Activated CD8-positive, alpha-beta T cell treated with anti-CD3 and anti-CD28 coated beads for 36 hours (primary cell): ENCODE measurements at regions of chr17 and their contacts with region 1.

Region 1: GRCh38 chr17:47615766-47616424 is 33.8 kb upstream of the KPNB1 start:
- DNase-seq: no peak
- ATAC-seq: no peak
- H3K4me3 Mint-ChIP-seq: no peak overlapping the region
- H3K27ac Mint-ChIP-seq: peak overlapping the region; percentile 13
- H3K4me1 Mint-ChIP-seq: peaks cover 15% of the 10 kb centered on the region
- H3K27me3 Mint-ChIP-seq: no peaks in the 10 kb centered on the region
- CTCF ChIP-seq: peak; percentile 84

Region 2: GRCh38 chr17:47352848-47353247 is 263.0 kb before region 1 on chr17:
- CTCF ChIA-PET with region 1: interaction called, 16 read pairs
- POLR2A ChIA-PET with region 1: no interaction called
- intact Hi-C with region 1: no loop called
- DNase-seq: no peak
- ATAC-seq: no peak
- H3K4me3 Mint-ChIP-seq: no peak overlapping the region
- H3K27ac Mint-ChIP-seq: no peak overlapping the region
- H3K4me1 Mint-ChIP-seq: peaks cover 4% of the 10 kb centered on the region
- H3K27me3 Mint-ChIP-seq: no peaks in the 10 kb centered on the region
- CTCF ChIP-seq: no peak

Region 3: GRCh38 chr17:47363171-47363570 is 252.7 kb before region 1 on chr17:
- CTCF ChIA-PET with region 1: interaction called, 18 read pairs
- POLR2A ChIA-PET with region 1: no interaction called
- intact Hi-C with region 1: no loop called
- DNase-seq: no peak
- ATAC-seq: no peak
- H3K4me3 Mint-ChIP-seq: no peak overlapping the region
- H3K27ac Mint-ChIP-seq: no peak overlapping the region
- H3K4me1 Mint-ChIP-seq: no peaks in the 10 kb centered on the region
- H3K27me3 Mint-ChIP-seq: no peaks in the 10 kb centered on the region
- CTCF ChIP-seq: no peak

Region 4: GRCh38 chr17:47368262-47368661 is 247.6 kb before region 1 on chr17:
- CTCF ChIA-PET with region 1: interaction called, 18 read pairs
- POLR2A ChIA-PET with region 1: no interaction called
- intact Hi-C with region 1: no loop called
- DNase-seq: no peak
- ATAC-seq: no peak
- H3K4me3 Mint-ChIP-seq: no peak overlapping the region
- H3K27ac Mint-ChIP-seq: no peak overlapping the region
- H3K4me1 Mint-ChIP-seq: no peaks in the 10 kb centered on the region
- H3K27me3 Mint-ChIP-seq: no peaks in the 10 kb centered on the region
- CTCF ChIP-seq: no peak

Region 5: GRCh38 chr17:47604598-47604927 is 11.3 kb before region 1 on chr17:
- CTCF ChIA-PET with region 1: interaction called, 40 read pairs
- POLR2A ChIA-PET with region 1: interaction called, 3 read pairs
- intact Hi-C with region 1: no loop called
- DNase-seq: no peak
- ATAC-seq: no peak
- H3K4me3 Mint-ChIP-seq: no peak overlapping the region
- H3K27ac Mint-ChIP-seq: no peak overlapping the region
- H3K4me1 Mint-ChIP-seq: peaks cover 3% of the 10 kb centered on the region
- H3K27me3 Mint-ChIP-seq: no peaks in the 10 kb centered on the region
- CTCF ChIP-seq: no peak

Region 6: GRCh38 chr17:47633996-47634395 is 18.1 kb after region 1 on chr17:
- CTCF ChIA-PET with region 1: interaction called, 26 read pairs
- POLR2A ChIA-PET with region 1: no interaction called
- intact Hi-C with region 1: no loop called
- DNase-seq: no peak
- ATAC-seq: no peak
- H3K4me3 Mint-ChIP-seq: no peak overlapping the region
- H3K27ac Mint-ChIP-seq: no peak overlapping the region
- H3K4me1 Mint-ChIP-seq: peaks cover 7% of the 10 kb centered on the region
- H3K27me3 Mint-ChIP-seq: no peaks in the 10 kb centered on the region
- CTCF ChIP-seq: no peak

Region 7: DNA sequence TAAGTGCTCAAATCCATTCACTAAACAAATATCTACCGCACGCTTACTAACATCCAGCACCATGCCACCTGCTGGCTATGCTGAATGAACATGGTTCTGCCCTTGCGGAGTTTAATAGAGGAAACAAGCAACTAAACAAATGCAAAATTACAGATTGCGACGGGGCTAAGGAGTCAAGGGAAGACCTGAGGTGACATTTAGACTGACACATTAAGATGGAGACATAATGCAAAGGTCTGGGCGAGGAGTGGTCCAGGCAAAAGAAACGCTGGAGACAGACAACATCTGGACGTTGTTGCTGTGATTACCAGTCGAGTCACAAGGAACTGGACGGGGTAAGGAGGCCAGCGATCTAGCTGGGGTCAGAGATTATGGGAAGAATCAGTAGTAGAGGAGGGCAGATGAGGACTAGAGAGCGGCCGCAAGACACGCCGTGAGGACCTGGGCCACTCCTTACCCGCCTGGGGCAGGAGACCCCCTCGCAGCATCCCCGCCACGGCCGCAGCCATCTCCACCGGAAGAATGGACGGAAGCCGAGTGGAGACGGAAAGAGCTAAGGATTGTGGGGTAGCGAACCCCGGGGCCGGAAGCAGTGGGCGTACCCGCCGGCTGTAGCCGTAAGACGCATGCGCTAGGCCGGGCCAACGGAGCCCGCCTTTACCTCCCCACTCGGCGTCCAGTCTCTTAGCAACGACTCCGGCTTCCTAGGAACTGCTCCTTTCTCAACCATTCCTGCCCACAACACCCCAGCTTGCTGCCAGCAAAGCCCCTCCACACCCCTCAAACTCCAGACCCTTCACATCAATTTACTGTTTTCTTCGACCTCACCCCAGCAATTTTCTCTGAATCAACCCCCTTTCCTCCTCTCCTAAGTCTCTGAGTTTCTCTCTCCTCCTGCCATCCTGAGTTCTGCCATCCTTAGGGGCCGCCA is 215.4 kb after region 1 on chr17 and contains the starts of genes LRRC46 and MRPL10:
- CTCF ChIA-PET with region 1: no interaction called
- POLR2A ChIA-PET with region 1: no interaction called
- intact Hi-C with region 1: no loop called
- DNase-seq: peak; percentile 95
- ATAC-seq: peak; percentile 93
- H3K4me3 Mint-ChIP-seq: peak within 1 kb of the TSS; percentile 91
- H3K27ac Mint-ChIP-seq: peak within 1 kb of the TSS; percentile 94
- H3K4me1 Mint-ChIP-seq: peaks cover 44% of the 10 kb centered on the region
- H3K27me3 Mint-ChIP-seq: no peaks in the 10 kb centered on the region
- CTCF ChIP-seq: peak; percentile 51
- total RNA-seq, gene LRRC46: 0.38 to 0.67 TPM
- total RNA-seq, gene MRPL10: 66.5 to 67.0 TPM